Activated CD4-positive, alpha-beta memory T cell treated with anti-CD3 and anti-CD28 coated beads, Interleukin-2, amount 10 ng/mL, durations not matched to agents 7 days and 5 days (primary cell): ENCODE measurements at regions of chr3 and their contacts with region 1.

Region 1: DNA sequence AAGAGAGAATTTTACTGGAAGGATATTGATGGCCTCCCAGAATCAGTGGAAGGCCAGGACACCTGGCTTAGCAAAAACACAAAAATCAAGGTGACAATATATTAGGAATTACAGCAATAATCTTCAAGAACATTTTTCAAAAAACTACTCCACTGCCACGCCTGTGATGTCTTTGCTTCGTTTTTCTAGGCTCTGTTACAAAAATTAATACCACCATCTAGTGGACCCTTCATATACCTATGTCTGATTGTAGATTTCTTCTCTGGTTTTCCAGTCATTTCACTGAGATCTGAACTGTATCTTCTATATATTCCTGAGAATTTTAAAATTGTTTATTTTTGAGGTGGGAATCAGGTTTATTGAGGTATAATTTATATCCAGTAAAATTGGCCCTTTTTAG is 5.6 kb upstream of the SLC33A1 start:
- DNase-seq: no peak
- H3K4me3 Mint-ChIP-seq: no peak overlapping the region
- H3K27ac Mint-ChIP-seq: peak overlapping the region; percentile 14
- H3K4me1 Mint-ChIP-seq: peaks cover 44% of the 10 kb centered on the region
- H3K27me3 Mint-ChIP-seq: no peaks in the 10 kb centered on the region

Region 2: GRCh38 chr3:155870133-155870944 is 10.5 kb after region 1 on chr3 and contains the start of gene GMPS:
- CTCF ChIA-PET with region 1: interaction called, 13 read pairs
- POLR2A ChIA-PET with region 1: interaction called, 33 read pairs
- DNase-seq: peak; percentile 96
- H3K4me3 Mint-ChIP-seq: peak within 1 kb of the TSS; percentile 97
- H3K27ac Mint-ChIP-seq: peak within 1 kb of the TSS; percentile 91
- H3K4me1 Mint-ChIP-seq: peaks cover 31% of the 10 kb centered on the region
- H3K27me3 Mint-ChIP-seq: no peaks in the 10 kb centered on the region
- total RNA-seq, gene GMPS: 106 to 111 TPM

Region 3: GRCh38 chr3:155921486-155921885 is 61.6 kb after region 1 on chr3:
- CTCF ChIA-PET with region 1: no interaction called
- POLR2A ChIA-PET with region 1: no interaction called
- DNase-seq: no peak
- H3K4me3 Mint-ChIP-seq: no peak overlapping the region
- H3K27ac Mint-ChIP-seq: no peak overlapping the region
- H3K4me1 Mint-ChIP-seq: peaks cover 3% of the 10 kb centered on the region
- H3K27me3 Mint-ChIP-seq: no peaks in the 10 kb centered on the region